Sigmoid colon (tissue), 7 donors: ENCODE measurements at regions of chr2 and their contacts with region 1.

Region 1: GRCh38 chr2:207625018-207625907 is at the start of gene METTL21A:
- DNase-seq: peak; percentile 93
- H3K4me3 ChIP-seq: peak within 1 kb of the TSS; percentile 59 to 92 (median 76)
- H3K27ac ChIP-seq: peak within 1 kb of the TSS; percentile 89 to 95 (median 94)
- H3K4me1 ChIP-seq: peaks cover 0 to 33% (median 24%) of the 10 kb centered on the region in 4 donors
- H3K27me3 ChIP-seq: no peaks in the 10 kb centered on the region
- CTCF ChIP-seq: peak in 3 of 4 experiments; percentile 8 to 45 (median 32)
- EP300 ChIP-seq: no peak
- POLR2A ChIP-seq: peak in 1 of 2 donors; percentile 29
- total RNA-seq, gene METTL21A: 12.9 to 23.5 (median 20.5) TPM

Region 2: GRCh38 chr2:207166039-207166348 is 459.3 kb before region 1 on chr2:
- intact Hi-C with region 1: loop called (anchors 10 kb)
- DNase-seq: peak; percentile 100
- H3K4me3 ChIP-seq: peak overlapping the region; percentile 67 to 92 (median 84)
- H3K27ac ChIP-seq: peak overlapping the region; percentile 96 to 100 (median 100)
- H3K4me1 ChIP-seq: peaks cover 0 to 31% (median 25%) of the 10 kb centered on the region in 4 donors
- H3K27me3 ChIP-seq: no peaks in the 10 kb centered on the region
- CTCF ChIP-seq: no peak
- EP300 ChIP-seq: peak in 2 of 4 donors; percentile 54 to 77
- POLR2A ChIP-seq: no peak

Region 3: DNA sequence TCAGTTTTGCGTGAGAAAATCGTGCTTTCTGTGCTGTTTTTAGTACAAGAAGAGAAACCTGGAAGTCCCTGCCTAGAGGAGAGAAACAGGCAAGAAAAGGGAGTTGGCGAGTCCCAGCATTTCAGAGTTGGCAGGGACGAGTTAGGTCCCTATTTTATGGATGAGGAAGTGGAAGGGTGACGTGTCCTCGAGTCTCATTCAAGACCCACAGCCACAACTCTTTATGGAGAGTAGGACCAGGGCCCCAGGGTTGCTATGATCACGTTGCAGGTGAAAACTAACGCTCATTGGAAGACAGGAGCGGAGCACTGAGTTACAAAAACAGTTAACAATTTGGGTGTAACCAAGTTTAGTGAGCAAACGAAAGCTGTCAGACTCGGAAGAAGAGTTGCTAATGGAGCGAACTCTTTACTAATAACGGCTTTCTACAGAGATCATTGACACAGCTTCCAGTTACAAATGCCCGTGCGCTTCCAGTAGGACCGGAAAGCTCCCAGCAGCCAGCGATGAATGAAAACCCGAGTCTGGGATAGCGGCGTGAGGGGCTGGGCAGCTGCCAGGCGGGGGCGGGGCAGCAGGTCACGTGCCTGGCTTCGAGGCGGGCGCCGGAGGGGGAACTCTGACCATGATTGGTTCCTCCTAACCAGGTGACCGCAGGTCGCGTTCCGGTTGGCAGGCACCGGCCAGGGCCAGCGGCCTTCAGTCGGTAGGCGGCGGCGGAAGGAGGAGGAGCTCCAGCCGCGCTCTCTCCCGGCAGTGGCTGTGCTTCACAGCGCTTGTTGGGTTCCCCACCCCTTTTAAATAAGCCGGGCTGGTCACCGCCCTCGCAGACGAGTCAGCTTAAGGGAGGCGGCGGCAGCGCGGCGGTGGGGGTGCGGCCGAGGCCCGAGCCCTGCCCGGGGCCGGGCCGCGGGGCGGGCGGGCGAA is 85.8 kb after region 1 on chr2 and contains the start of gene CCNYL1:
- intact Hi-C with region 1: loop called (anchors 1 kb)
- DNase-seq: peak; percentile 100
- H3K4me3 ChIP-seq: peak within 1 kb of the TSS; percentile 77 to 98 (median 89)
- H3K27ac ChIP-seq: peak within 1 kb of the TSS; percentile 91 to 95 (median 92)
- H3K4me1 ChIP-seq: peaks cover 0 to 25% (median 21%) of the 10 kb centered on the region in 4 donors
- H3K27me3 ChIP-seq: no peaks in the 10 kb centered on the region
- CTCF ChIP-seq: peak in 3 of 4 experiments; percentile 18 to 41 (median 23)
- EP300 ChIP-seq: no peak
- POLR2A ChIP-seq: peak; percentile 38 to 69
- total RNA-seq, gene CCNYL1: 9.2 to 17.8 (median 11.5) TPM

Region 4: DNA sequence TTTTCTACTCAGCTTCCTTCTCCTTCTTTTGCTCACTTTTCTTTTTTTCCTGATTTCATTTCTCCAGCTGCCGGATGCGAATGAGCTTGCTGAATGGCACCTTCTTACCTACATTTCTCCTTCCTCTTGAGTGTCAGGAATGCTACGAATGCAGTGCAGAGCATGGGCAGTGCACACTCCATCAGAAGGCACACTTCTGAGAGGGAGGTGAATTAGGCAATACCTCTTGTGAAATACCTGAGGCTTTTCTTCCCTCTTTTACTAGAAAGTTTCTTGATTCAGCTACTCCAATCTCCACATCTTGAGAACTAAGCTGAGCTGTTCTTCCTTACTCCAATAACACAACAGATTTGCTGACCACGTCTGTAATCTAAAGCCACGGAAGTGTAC is 348.9 kb after region 1 on chr2:
- intact Hi-C with region 1: loop called (anchors 5 kb)
- DNase-seq: no peak
- H3K4me3 ChIP-seq: no peak overlapping the region
- H3K27ac ChIP-seq: no peak overlapping the region
- H3K4me1 ChIP-seq: peaks cover 0 to 32% (median 20%) of the 10 kb centered on the region in 4 donors
- H3K27me3 ChIP-seq: no peaks in the 10 kb centered on the region
- CTCF ChIP-seq: no peak
- EP300 ChIP-seq: no peak
- POLR2A ChIP-seq: no peak

Region 5: DNA sequence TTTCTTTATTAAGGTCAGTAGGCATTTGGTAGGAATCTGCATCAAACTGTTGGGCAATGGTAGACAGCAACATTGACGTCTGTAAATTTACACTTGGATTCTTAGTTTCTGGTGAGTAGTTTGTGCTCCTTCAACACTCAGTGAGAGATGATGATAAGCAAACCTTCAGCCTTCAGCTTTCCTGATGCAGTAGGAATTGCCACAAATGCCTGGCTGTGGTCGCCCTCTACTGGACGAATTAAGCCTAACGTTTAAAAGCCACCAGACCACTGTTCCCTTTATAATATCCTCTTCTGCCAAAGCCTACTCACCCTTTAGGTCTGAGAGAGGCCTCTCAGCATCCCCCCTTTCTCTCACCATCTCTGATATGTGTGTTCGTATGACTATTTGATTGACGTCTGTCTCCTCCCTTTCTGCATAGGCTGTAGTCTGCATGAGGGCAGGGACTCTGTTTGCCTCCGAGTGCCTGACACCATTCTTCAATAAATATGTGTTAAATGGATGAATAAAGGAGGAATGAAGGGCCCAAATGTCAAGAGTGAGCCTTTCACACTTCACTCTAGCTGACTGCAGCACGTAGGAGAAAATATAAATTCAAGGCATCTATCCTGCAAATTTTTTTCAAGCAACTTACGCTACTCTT is 447.1 kb after region 1 on chr2:
- intact Hi-C with region 1: loop called (anchors 5 kb)
- DNase-seq: peak; percentile 78
- H3K4me3 ChIP-seq: no peak overlapping the region
- H3K27ac ChIP-seq: no peak overlapping the region
- H3K4me1 ChIP-seq: no peaks in the 10 kb centered on the region
- H3K27me3 ChIP-seq: no peaks in the 10 kb centered on the region
- CTCF ChIP-seq: peak; percentile 31 to 80 (median 56)
- EP300 ChIP-seq: no peak
- POLR2A ChIP-seq: no peak